ENCODE measurements at regions of chr4 and their contacts with region 1.

Region 1: DNA sequence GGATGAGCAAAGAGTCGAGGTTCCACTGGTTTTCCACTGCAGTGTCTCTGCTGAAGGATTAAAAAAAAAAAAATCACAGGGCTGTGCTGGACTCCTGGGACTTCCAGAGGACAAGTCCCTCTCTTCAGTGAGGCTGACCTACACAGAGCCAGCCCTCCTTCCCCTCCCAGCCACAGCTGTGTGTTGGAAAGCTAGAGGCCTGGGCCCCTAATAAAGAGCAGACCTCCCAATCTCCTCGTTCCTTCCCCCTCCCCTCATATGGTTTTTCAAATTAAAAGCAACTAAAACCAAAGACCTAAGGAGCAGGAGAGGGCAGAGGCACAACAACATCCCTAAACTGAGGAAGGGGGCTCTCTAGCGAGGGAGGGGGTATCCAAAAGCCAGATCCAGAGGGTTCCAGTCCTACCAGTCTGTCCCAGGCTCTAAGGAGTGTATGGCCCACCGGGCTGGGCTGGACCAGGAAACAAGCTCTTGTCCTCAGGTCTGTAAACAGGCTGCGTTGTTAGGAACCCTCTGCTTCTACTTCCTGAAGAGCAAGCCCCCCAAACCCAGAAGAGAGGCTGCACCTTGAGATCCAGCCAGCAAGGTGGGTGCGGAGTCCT is 4.0 kb upstream of the PDGFRA start:
- DNase-seq: no peak
- ATAC-seq: no peak

Region 2: DNA sequence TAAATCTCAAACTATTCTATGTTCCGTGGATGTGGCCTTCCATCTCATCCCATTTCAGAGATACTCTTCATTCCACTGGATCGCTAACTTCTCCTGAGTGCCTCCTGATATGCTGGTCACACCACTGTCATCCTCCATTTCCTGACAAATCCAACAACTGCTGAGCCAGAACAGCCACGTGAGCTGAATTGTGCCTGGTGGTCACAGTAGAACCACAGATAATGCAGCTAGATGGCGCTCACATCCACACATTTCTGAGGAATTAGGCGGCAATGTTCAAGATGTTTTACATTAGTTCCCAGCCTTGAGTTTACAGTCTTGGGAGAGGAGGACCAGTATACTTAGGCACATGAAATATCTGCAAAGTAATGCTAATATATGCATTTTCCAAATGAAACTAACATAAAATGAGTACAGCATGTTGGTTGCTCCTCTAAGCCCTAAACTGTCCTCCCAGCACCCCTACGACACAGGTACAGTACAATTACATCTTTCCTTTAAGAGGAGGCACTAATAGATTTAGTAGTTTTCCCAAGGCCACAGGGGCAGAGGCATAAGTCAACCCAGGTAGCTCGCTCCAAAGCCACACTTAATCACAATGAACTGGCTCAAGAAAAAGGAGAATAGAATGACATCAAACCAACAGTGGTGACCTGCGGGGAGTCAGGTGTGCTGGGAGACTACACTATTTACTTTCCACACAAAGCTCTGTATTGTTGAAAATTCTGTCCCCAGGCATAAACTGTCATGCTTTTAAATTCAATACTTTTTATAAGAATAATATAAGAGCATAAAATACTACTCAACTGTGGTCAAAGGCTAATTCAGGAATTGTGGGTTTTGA is 294.9 kb before region 1 on chr4:
- intact Hi-C with region 1: loop called (anchors 5 kb)
- DNase-seq: peak; percentile 84
- ATAC-seq: peak; percentile 94